AG04449 (cell line): ENCODE measurements at regions of chr2 and their contacts with region 1.

Region 1: GRCh38 chr2:240149943-240150784 is 9.7 kb upstream of the OTOS start:
- DNase-seq: no peak
- H3K4me3 ChIP-seq: no peak overlapping the region
- CTCF ChIP-seq: peak; percentile 87

Region 2: GRCh38 chr2:240060977-240061591 is 89.1 kb before region 1 on chr2:
- CTCF ChIA-PET with region 1: interaction called, 227 read pairs
- POLR2A ChIA-PET with region 1: no interaction called
- DNase-seq: peak; percentile 4
- H3K4me3 ChIP-seq: no peak overlapping the region
- CTCF ChIP-seq: peak; percentile 54

Region 3: GRCh38 chr2:240077442-240077841 is 72.7 kb before region 1 on chr2:
- CTCF ChIA-PET with region 1: no interaction called
- POLR2A ChIA-PET with region 1: no interaction called
- DNase-seq: no peak
- H3K4me3 ChIP-seq: no peak overlapping the region
- CTCF ChIP-seq: no peak

Region 4: DNA sequence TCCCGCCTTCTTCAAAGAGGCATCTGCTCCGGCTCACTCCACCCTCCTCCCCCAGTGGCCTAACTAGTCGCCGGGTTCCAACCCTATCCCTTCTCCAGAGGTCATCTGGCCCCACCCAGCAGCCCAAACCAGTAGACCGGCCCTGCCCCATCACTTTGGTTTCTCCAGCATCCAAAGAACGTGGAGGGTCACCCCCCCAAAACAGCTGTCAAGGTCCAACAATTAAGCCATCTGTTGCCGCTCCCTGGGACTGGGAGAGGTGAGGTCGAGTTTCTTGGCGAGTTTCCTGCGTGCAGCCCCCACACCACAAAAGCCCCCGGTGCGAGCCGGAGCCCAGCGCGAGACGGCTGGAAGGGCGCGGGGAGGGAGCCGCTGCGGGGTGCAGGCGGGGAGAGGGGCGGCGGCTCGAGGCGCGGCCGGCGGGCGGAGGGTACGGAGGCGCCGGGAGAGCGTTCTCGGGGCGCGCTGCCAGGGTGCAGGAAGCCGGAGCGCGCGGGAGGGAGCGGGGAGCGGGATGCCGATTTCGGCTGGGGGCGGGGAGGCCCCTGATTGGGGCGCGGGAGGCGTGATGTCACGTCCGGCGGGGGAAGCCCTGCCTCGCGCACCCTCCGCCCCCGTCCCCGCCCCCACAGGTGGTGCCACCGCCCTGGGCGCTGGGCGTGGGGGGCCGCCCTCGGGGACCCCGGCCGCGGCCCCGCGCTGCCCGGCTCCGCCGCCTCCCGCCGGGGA is 284.7 kb after region 1 on chr2:
- CTCF ChIA-PET with region 1: interaction called, 17 read pairs
- POLR2A ChIA-PET with region 1: no interaction called
- DNase-seq: no peak
- H3K4me3 ChIP-seq: peak overlapping the region; percentile 66
- CTCF ChIP-seq: no peak